Thyroid gland (tissue), 4 donors: ENCODE measurements at regions of chr13 and their contacts with region 1.

Region 1: DNA sequence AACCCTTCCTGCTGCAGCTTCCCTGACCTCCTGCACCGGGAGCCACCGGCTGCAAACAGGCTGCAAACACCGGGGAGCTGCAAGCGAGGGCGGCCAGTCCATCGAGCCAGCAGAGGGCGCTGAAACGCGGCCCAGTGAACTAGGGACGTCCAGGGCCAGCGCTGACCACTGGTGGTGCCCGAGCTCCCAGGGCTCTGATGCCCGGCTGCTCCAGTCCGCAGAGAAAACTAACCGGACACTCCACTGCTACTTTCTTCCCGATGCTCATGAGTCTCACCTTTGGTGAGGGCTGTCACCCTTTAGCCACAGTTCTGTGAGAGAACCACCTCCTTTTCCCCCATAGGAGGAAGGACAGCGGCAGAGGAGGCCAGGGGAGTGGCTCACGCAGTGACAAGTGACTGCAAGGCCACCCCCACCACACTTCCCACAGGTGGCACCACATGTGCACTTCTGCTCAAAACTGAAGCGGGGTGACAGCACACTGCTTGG is 82.8 kb upstream of the MTIF3 start:
- DNase-seq: peak; percentile 87 to 93
- H3K4me3 ChIP-seq: no peak overlapping the region
- H3K27ac ChIP-seq: no peak overlapping the region
- H3K4me1 ChIP-seq: peaks cover 32 to 37% of the 10 kb centered on the region in 2 donors
- H3K27me3 ChIP-seq: no peaks in the 10 kb centered on the region
- CTCF ChIP-seq: peak; percentile 80 to 97 (median 90)
- POLR2A ChIP-seq: no peak

Region 2: DNA sequence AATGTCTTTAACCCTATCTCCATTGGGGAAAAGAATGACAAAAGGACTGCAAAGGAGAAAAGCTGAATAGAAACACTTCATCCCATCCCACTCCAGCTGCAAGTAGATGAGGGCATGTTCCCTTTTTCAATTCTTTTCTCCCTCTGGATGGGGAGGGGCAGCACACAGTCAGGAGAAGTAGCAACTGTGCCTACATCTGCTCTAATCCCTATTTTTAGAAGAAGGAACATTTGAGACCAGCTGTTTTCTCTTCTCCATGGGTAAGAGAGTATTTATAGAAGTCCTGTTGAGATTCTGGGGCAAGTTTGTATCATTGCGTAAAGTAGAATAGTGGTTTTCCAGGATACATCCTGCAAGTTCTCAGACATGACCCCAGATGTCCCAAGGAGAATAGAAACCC is 118.1 kb before region 1 on chr13:
- intact Hi-C with region 1: loop called (anchors 10 kb)
- DNase-seq: no peak
- H3K4me3 ChIP-seq: no peak overlapping the region
- H3K27ac ChIP-seq: no peak overlapping the region
- H3K4me1 ChIP-seq: no peaks in the 10 kb centered on the region
- H3K27me3 ChIP-seq: no peaks in the 10 kb centered on the region
- CTCF ChIP-seq: no peak
- POLR2A ChIP-seq: no peak

Region 3: DNA sequence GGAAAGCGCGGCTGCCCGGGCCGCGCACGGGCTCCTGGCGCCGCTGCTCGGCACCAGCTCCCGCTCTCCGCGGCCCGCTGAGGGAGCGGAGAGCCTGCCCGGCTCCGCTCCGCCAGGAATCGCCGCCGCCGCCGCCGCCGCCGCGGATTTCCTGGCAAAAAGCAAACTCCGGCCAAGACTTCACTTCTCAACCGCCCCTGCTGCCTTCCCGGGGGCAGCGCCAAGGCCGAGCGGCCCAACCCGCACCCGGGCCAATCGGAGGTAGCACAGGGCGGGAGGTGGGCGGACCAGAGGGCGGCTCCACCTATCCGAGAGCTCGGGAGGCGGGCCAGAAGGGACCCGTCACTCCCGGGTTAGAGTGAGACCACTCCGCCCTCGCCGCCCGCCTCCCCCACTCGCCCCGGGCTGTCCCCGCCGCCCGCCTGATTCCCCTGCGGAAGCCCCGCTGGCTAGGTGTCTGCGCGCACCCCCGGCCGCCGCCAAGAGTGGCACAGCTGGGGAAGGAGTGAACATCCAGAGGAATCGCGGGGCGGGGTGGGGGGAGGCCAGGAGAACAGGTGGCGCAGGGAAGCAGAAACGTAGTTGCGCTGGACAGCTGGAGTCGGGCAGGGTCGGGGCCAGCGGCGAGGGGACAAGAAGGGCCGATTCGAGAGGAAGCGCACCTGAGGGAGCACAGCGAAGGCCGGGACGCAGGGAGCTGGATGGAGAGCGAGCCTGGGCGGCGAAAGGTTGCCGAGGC is 87.3 kb after region 1 on chr13 and contains the start of gene LNX2:
- intact Hi-C with region 1: loop called (anchors 10 kb)
- DNase-seq: peak; percentile 99
- H3K4me3 ChIP-seq: peak within 1 kb of the TSS; percentile 79 to 88 (median 84)
- H3K27ac ChIP-seq: peak within 1 kb of the TSS; percentile 96 to 98 (median 98)
- H3K4me1 ChIP-seq: peaks cover 25 to 33% of the 10 kb centered on the region in 2 donors
- H3K27me3 ChIP-seq: no peaks in the 10 kb centered on the region
- CTCF ChIP-seq: no peak
- POLR2A ChIP-seq: peak; percentile 59 to 94
- total RNA-seq, gene LNX2: 17.3 to 19.9 (median 17.8) TPM

Region 4: DNA sequence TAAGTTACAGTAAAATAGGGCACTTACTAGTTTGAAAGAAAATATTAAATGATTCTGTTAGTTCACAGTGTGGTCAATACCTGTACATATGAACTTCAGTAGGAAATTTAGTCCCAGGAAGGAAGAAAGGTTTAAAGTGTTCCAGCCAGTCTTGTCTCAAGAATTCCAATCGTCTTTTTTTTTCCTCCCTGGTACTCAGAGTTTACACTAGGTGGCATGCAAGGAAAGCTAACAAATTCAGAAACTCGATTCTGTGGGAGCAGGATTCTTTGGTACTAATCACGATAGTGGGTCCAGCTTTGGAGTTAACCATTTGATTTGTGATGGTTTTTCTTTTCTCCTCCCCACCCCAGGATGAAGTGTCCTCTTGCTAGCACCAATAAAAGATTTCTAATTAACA is 132.1 kb after region 1 on chr13:
- intact Hi-C with region 1: no loop called
- DNase-seq: no peak
- H3K4me3 ChIP-seq: no peak overlapping the region
- H3K27ac ChIP-seq: no peak overlapping the region
- H3K4me1 ChIP-seq: peaks cover 6 to 9% of the 10 kb centered on the region in 2 donors
- H3K27me3 ChIP-seq: no peaks in the 10 kb centered on the region
- CTCF ChIP-seq: no peak
- POLR2A ChIP-seq: no peak